Psoas muscle (tissue), 8 donors: ENCODE measurements at regions of chr16 and their contacts with region 1.

Region 1: GRCh38 chr16:67461600-67462592 is 19.1 kb downstream of the ATP6V0D1 start:
- DNase-seq: peak in 1 of 2 donors; percentile 80
- ATAC-seq: peak in 2 of 4 donors; percentile 66 to 67
- H3K4me3 ChIP-seq: no peak overlapping the region
- H3K27ac ChIP-seq: no peak overlapping the region
- H3K4me1 ChIP-seq: peaks cover 90% of the 10 kb centered on the region
- H3K27me3 ChIP-seq: no peaks in the 10 kb centered on the region
- CTCF ChIP-seq: no peak

Region 2: GRCh38 chr16:67269766-67270165 is 192.1 kb before region 1 on chr16:
- intact Hi-C with region 1: loop called in 1 of 2 experiments (anchors 5 kb)
- DNase-seq: peak in 1 of 2 donors; percentile 34
- ATAC-seq: no peak
- H3K4me3 ChIP-seq: no peak overlapping the region
- H3K27ac ChIP-seq: no peak overlapping the region
- H3K4me1 ChIP-seq: no peaks in the 10 kb centered on the region
- H3K27me3 ChIP-seq: no peaks in the 10 kb centered on the region
- CTCF ChIP-seq: no peak

Region 3: GRCh38 chr16:67364600-67365235 is 97.2 kb before region 1 on chr16:
- intact Hi-C with region 1: loop called in 1 of 2 experiments (anchors 5 kb)
- DNase-seq: no peak
- ATAC-seq: no peak
- H3K4me3 ChIP-seq: no peak overlapping the region
- H3K27ac ChIP-seq: no peak overlapping the region
- H3K4me1 ChIP-seq: no peaks in the 10 kb centered on the region
- H3K27me3 ChIP-seq: peaks cover 0 to 3% (median 0%) of the 10 kb centered on the region in 3 donors
- CTCF ChIP-seq: no peak

Region 4: GRCh38 chr16:67399181-67399733 is 62.6 kb before region 1 on chr16:
- intact Hi-C with region 1: no loop called
- DNase-seq: peak; percentile 42 to 77
- ATAC-seq: peak; percentile 17 to 59 (median 26)
- H3K4me3 ChIP-seq: no peak overlapping the region
- H3K27ac ChIP-seq: no peak overlapping the region
- H3K4me1 ChIP-seq: peaks cover 27% of the 10 kb centered on the region
- H3K27me3 ChIP-seq: peaks cover 0 to under 1% (median 0%) of the 10 kb centered on the region in 3 donors
- CTCF ChIP-seq: peak; percentile 46

Region 5: GRCh38 chr16:67428146-67428731 is 33.7 kb before region 1 on chr16:
- intact Hi-C with region 1: loop called (anchors 2 kb)
- DNase-seq: peak; percentile 74 to 88
- ATAC-seq: peak; percentile 75 to 83 (median 80)
- H3K4me3 ChIP-seq: no peak overlapping the region
- H3K27ac ChIP-seq: no peak overlapping the region
- H3K4me1 ChIP-seq: peaks cover 6% of the 10 kb centered on the region
- H3K27me3 ChIP-seq: no peaks in the 10 kb centered on the region
- CTCF ChIP-seq: peak; percentile 89